Ascending aorta (tissue), 2 donors: ENCODE measurements at regions of chr7 and their contacts with region 1.

Region 1: GRCh38 chr7:75639071-75639885 is 99.5 kb downstream of the HIP1 start:
- DNase-seq: peak in 1 of 2 donors; percentile 73
- H3K4me3 ChIP-seq: peak overlapping the region; percentile 75 to 86
- H3K27ac ChIP-seq: peak overlapping the region; percentile 81 to 89
- H3K4me1 ChIP-seq: peaks cover 4 to 27% of the 10 kb centered on the region in 2 donors
- H3K27me3 ChIP-seq: no peaks in the 10 kb centered on the region
- CTCF ChIP-seq: no peak

Region 2: DNA sequence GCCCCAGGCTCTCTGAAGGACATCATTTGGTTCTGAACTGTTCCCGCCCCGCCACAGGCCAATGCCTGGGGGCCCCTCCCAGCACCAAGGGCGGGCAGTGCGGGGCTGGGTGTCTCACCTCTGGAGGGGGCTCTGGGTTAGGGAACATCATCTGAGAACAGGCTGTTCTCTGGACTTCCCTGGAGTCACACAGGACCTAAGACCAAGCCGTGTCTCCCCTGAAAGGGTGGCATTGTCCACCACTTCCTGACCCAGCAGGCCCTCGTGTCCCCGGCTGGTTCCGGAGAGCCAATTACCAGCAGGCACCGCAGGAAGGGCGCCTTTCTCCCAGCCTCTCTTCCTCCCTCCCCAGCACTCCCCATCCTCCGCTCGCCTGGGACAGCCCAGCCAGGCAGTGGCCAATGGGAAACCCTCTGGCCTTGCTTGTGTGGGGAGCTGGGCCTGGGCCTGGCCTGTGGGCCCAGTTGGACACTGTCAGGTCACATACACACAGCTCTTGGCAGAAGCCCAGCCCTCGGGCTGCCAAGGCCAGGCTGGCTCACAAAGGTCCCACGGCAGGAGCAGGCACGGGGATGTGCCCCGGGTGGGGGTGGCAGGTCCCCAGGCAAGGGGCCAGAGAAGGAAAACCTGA is 27.6 kb before region 1 on chr7:
- intact Hi-C with region 1: loop called (anchors 2 kb)
- DNase-seq: peak; percentile 54 to 91
- H3K4me3 ChIP-seq: peak overlapping the region; percentile 42
- H3K27ac ChIP-seq: peak overlapping the region; percentile 68 to 83
- H3K4me1 ChIP-seq: peaks cover 0 to 12% of the 10 kb centered on the region in 2 donors
- H3K27me3 ChIP-seq: no peaks in the 10 kb centered on the region
- CTCF ChIP-seq: peak in 1 of 3 experiments; percentile 8

Region 3: DNA sequence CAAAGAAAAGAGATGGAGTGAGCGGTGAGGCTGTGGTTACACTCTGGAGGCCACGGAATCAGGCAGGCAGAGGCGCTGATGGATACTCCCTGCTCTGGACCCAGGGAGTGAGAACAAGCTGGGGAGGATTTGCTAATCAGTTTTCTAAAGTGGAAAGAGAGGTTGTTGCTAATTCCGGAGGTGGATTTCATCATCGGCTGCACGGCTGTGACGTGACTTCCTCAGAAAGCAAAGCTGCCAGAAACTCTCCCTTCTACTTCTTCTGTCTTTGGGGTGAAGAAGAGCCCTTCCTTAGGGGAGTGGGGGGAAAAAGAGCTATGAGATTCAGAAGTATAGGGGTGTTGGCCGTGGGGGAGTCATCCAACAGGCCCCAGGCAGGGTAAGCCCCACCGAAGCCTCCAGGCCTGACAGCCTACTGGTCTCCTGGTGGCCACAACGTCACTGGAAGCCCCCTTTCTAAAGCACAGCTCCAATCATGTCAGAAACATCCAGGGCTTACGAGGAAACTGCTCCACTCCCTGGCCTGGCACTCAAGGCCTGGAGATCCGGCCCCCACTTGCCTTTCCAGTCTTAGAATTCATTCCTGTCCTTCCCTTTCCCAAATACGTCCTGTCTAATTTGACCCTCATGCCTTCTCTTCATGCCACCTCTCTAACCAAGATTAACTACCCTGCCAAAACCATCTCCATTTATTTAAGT is 15.0 kb before region 1 on chr7:
- intact Hi-C with region 1: loop called (anchors 2 kb)
- DNase-seq: peak; percentile 18 to 87
- H3K4me3 ChIP-seq: no peak overlapping the region
- H3K27ac ChIP-seq: peak overlapping the region; percentile 85 to 86
- H3K4me1 ChIP-seq: peaks cover 8 to 13% of the 10 kb centered on the region in 2 donors
- H3K27me3 ChIP-seq: no peaks in the 10 kb centered on the region
- CTCF ChIP-seq: no peak